Colonic mucosa (tissue), 4 donors: ENCODE measurements at regions of chr1 and their contacts with region 1.

Region 1: DNA sequence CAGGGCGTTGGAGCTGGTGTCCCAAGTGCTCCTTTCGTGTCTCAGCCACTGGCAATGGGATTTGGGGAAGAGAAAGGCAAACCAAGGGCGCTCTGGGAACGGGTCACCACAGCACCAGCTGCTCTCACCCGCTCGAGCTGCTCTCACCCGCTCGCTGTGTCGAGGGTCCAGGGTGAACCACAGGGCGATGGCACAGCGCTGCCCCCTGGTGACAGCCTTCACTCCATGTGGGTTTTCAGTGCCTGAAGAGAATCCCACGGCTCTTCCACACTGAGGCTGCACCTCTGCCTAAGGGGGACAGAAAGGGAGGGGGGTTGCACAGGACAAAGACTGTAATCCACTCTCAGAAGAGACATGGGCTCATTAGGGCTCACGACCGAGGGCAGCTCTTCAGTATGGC is 7.1 kb upstream of the CLDN19 start:
- DNase-seq: peak; percentile 41
- H3K4me3 ChIP-seq: no peak overlapping the region
- H3K27ac ChIP-seq: no peak overlapping the region
- H3K4me1 ChIP-seq: no peaks in the 10 kb centered on the region
- H3K27me3 ChIP-seq: no peaks in the 10 kb centered on the region
- CTCF ChIP-seq: peak; percentile 44

Region 2: DNA sequence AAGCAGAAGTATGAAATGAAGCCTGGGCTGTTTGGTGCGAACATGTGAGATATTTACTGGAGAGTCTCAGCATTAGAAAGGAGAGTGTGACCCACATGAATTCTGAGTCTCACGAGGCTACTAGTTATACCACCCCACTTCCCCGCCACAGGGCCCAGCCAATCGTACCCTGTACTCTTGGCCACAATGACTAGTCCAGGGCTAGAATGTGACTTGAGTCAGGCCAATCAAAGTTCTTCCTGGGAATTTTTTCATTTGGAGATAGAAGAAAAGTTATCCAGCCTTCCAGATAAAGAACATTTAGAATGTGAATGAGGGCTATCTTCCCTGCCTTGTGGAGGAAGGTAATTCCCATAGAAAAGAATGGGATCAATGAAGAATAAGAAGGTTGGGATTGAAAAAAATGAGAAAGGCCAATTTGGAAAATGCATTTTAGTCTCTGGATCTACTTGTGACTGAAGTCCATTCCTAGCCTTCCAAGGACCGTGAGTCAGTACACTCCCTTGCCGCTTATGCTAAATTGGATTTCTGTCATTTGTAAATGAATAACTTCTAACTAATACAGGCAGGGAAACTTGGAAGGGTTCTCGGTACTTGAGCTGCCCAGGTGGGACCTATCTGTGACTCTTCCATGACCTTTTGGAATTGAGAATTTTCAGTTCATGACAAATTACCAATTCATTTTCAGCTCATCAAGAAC is 378.9 kb before region 1 on chr1:
- intact Hi-C with region 1: no loop called
- DNase-seq: no peak
- H3K4me3 ChIP-seq: no peak overlapping the region
- H3K27ac ChIP-seq: no peak overlapping the region
- H3K4me1 ChIP-seq: no peaks in the 10 kb centered on the region
- H3K27me3 ChIP-seq: no peaks in the 10 kb centered on the region
- CTCF ChIP-seq: no peak

Region 3: DNA sequence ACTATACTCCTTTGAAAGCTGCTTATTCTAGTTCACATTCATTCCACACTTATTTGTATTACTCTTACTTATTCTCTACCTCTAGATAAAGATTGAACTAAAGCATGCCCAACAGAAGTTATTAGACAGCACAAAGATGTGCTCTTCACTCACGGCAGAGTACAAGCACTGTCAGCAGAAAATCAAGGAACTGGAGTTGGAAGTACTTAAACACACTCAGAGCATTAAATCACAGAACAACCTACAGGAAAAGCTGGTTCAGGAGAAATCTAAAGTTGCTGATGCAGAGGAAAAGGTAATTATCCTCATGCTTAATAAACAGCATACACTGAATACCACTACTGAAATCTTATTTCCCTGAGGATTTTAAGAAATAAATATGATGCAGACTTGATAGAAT is 170.2 kb before region 1 on chr1:
- intact Hi-C with region 1: loop called (anchors 5 kb)
- DNase-seq: no peak
- H3K4me3 ChIP-seq: no peak overlapping the region
- H3K27ac ChIP-seq: no peak overlapping the region
- H3K4me1 ChIP-seq: no peaks in the 10 kb centered on the region
- H3K27me3 ChIP-seq: no peaks in the 10 kb centered on the region
- CTCF ChIP-seq: no peak